ENCODE measurements at regions of chr20 and their contacts with region 1.

Region 1: DNA sequence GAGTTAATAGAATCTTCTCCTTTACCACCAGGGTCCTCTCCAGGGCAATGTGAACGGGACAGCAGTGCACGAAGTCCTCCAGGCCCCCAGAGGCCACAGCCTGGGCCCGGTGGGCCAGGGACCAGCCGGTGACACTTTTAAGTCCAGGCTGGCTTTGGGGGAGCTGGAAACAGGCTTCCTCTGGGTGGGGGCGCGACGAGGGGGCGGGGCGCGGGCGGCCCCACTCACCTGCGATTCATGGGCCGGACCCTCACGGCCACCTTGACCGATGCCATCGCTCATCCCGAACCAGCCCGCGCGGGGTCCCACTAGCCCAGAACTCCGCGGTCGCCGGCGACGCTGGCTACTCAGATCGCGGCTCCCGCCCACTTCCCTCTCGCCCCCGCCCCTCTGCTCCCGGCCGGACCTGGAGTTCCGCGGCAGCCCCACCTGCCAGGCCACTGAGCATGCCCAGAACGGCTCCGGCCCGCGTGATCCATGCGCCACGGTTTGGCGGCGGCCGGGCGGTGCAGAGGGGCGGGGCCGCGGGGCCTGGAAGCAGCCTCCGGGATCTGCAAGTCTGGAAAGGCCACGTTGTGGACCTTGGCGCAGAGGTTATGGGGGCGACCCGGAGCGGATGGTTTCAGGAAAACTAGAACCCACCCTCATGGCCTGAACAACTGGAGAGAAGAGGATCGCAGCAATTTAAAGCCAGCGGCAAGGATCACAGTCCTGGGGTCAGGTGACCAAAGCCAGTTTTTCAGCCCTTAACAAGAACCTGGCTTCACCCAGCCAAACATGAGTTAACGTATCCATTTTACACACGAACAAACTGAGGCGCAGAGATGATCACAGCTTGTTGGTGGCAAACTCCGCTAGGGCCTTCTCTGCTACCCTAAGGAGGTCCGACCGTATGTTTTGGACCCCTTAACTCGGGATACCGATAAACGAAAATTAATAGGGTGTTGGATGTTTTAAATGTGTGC is at the start of gene KIF16B:
- DNase-seq: peak; percentile 95 to 99
- H3K4me3 ChIP-seq: peak within 1 kb of the TSS; percentile 66
- H3K4me3 Mint-ChIP-seq: peak within 1 kb of the TSS; percentile 86
- H3K27ac Mint-ChIP-seq: peak within 1 kb of the TSS; percentile 91
- H3K4me1 ChIP-seq: peaks cover 11% of the 10 kb centered on the region; the same call in 1 of the 2 replicates
- H3K4me1 Mint-ChIP-seq: peaks cover 22% of the 10 kb centered on the region
- H3K27me3 ChIP-seq: no peaks in the 10 kb centered on the region
- H3K27me3 Mint-ChIP-seq: no peaks in the 10 kb centered on the region
- CTCF ChIP-seq: peak in 1 of 2 experiments; percentile 40
- total RNA-seq, gene KIF16B: 10.9 and 11.3 TPM in 2 replicates

Region 2: GRCh38 chr20:16279320-16279719 is 294.0 kb before region 1 on chr20:
- CTCF ChIA-PET with region 1: no interaction called
- POLR2A ChIA-PET with region 1: no interaction called
- intact Hi-C with region 1: loop called (anchors 10 kb)
- DNase-seq: peak in 1 of 2 experiments; percentile 41
- H3K4me3 ChIP-seq: no peak overlapping the region
- H3K4me3 Mint-ChIP-seq: no peak overlapping the region
- H3K27ac Mint-ChIP-seq: no peak overlapping the region
- H3K4me1 ChIP-seq: peaks cover 11% of the 10 kb centered on the region
- H3K4me1 Mint-ChIP-seq: no peaks in the 10 kb centered on the region
- H3K27me3 ChIP-seq: no peaks in the 10 kb centered on the region
- H3K27me3 Mint-ChIP-seq: no peaks in the 10 kb centered on the region
- CTCF ChIP-seq: peak in 1 of 2 experiments; percentile 33

Region 3: GRCh38 chr20:16407251-16408067 is 165.8 kb before region 1 on chr20:
- CTCF ChIA-PET with region 1: no interaction called
- POLR2A ChIA-PET with region 1: no interaction called
- intact Hi-C with region 1: loop called (anchors 10 kb)
- DNase-seq: peak; percentile 86 to 94
- H3K4me3 ChIP-seq: no peak overlapping the region
- H3K4me3 Mint-ChIP-seq: peak overlapping the region; percentile 61
- H3K27ac Mint-ChIP-seq: peak overlapping the region; percentile 57
- H3K4me1 ChIP-seq: peaks cover 36% of the 10 kb centered on the region
- H3K4me1 Mint-ChIP-seq: peaks cover 23% of the 10 kb centered on the region
- H3K27me3 ChIP-seq: no peaks in the 10 kb centered on the region
- H3K27me3 Mint-ChIP-seq: no peaks in the 10 kb centered on the region
- CTCF ChIP-seq: no peak

Region 4: GRCh38 chr20:16528078-16528477 is 45.2 kb before region 1 on chr20:
- CTCF ChIA-PET with region 1: no interaction called
- POLR2A ChIA-PET with region 1: no interaction called
- intact Hi-C with region 1: loop called (anchors 5 kb)
- DNase-seq: peak; percentile 54 to 70
- H3K4me3 ChIP-seq: no peak overlapping the region
- H3K4me3 Mint-ChIP-seq: no peak overlapping the region
- H3K27ac Mint-ChIP-seq: no peak overlapping the region
- H3K4me1 ChIP-seq: peaks cover 11% of the 10 kb centered on the region
- H3K4me1 Mint-ChIP-seq: peaks cover 16% of the 10 kb centered on the region
- H3K27me3 ChIP-seq: no peaks in the 10 kb centered on the region
- H3K27me3 Mint-ChIP-seq: no peaks in the 10 kb centered on the region
- CTCF ChIP-seq: no peak

Region 5: DNA sequence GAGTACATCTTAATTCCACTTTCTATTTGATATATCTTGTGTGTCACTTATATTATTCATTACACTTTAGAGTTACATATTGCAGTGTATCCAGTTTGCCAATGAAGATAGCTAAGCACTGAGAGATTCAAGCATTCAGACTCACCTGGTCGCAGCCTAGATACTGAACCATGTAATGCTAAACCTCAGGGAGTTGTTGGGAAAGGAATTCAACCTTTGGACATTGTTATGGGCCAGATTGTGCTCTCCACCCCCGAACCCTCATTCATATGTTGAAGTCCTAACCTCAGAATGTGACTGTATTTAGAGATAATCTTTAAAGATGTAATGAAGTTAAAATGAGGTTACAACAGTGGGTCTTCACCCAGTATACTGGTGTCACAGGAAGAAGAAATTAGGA is 13.8 kb after region 1 on chr20:
- CTCF ChIA-PET with region 1: no interaction called
- POLR2A ChIA-PET with region 1: no interaction called
- intact Hi-C with region 1: loop called (anchors 1 kb)
- DNase-seq: no peak
- H3K4me3 ChIP-seq: no peak overlapping the region
- H3K4me3 Mint-ChIP-seq: no peak overlapping the region
- H3K27ac Mint-ChIP-seq: no peak overlapping the region
- H3K4me1 ChIP-seq: peaks cover 24% of the 10 kb centered on the region
- H3K4me1 Mint-ChIP-seq: peaks cover 17% of the 10 kb centered on the region
- H3K27me3 ChIP-seq: no peaks in the 10 kb centered on the region
- H3K27me3 Mint-ChIP-seq: no peaks in the 10 kb centered on the region
- CTCF ChIP-seq: no peak

Region 6: DNA sequence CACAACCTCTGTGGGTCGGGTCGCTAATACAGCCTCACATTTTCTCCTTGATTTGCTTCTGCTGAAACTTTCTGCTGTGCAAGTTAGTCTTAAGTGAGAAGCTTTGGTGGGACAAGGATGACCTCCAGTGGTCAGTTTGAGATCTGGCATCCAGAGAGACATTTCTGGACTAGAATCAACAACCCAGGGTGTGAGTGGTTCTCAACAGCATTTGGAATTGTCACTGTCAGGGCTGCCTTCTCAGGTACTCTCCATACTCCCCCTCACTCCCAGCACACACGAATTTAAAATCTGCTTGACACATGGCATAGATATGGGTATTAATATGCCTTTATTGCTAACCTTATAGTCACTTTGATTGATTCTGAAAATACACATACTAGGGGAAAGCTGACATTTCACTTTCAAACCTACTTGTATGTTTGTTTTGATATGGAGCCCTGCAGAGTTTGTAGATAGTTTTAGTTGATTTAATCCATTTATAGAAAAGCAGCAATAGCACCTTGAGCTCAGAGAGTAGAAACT is 188.1 kb after region 1 on chr20:
- CTCF ChIA-PET with region 1: no interaction called
- POLR2A ChIA-PET with region 1: no interaction called
- intact Hi-C with region 1: loop called (anchors 2 kb)
- DNase-seq: peak; percentile 71 to 72
- H3K4me3 ChIP-seq: no peak overlapping the region
- H3K4me3 Mint-ChIP-seq: peak overlapping the region; percentile 12
- H3K27ac Mint-ChIP-seq: no peak overlapping the region
- H3K4me1 ChIP-seq: peaks cover 10% of the 10 kb centered on the region
- H3K4me1 Mint-ChIP-seq: peaks cover 7% of the 10 kb centered on the region
- H3K27me3 ChIP-seq: no peaks in the 10 kb centered on the region
- H3K27me3 Mint-ChIP-seq: peaks cover 3% of the 10 kb centered on the region
- CTCF ChIP-seq: peak; percentile 81 to 84